Aorta (tissue), 5 donors: ENCODE measurements at regions of chr4 and their contacts with region 1.

Region 1: GRCh38 chr4:87961993-87962392 is 13.5 kb upstream of the SPP1 start:
- DNase-seq: no peak
- ATAC-seq: no peak
- H3K4me3 ChIP-seq: no peak overlapping the region
- H3K27ac ChIP-seq: no peak overlapping the region
- H3K4me1 ChIP-seq: no peaks in the 10 kb centered on the region
- H3K27me3 ChIP-seq: no peaks in the 10 kb centered on the region

Region 2: DNA sequence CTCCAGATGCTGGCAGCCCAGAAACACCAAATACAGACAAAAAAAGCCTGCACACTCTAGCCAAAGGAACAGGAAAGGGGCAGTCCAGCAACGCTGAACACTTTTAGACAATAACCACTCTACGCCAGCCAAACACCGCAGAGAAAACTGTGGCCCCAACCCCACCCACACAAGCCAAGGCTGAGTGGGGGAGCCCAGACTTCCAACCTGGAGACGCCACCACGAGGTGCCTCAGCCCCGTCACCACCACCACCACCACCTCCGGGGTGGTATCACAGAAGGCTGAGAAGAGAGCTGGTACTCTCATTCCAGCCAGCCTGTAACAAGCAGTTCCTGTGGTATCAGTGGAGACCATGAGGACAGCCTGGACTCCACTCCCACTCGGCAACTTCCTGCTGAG is 106.4 kb before region 1 on chr4:
- intact Hi-C with region 1: no loop called
- DNase-seq: no peak
- ATAC-seq: no peak
- H3K4me3 ChIP-seq: no peak overlapping the region
- H3K27ac ChIP-seq: no peak overlapping the region
- H3K4me1 ChIP-seq: no peaks in the 10 kb centered on the region
- H3K27me3 ChIP-seq: no peaks in the 10 kb centered on the region

Region 3: DNA sequence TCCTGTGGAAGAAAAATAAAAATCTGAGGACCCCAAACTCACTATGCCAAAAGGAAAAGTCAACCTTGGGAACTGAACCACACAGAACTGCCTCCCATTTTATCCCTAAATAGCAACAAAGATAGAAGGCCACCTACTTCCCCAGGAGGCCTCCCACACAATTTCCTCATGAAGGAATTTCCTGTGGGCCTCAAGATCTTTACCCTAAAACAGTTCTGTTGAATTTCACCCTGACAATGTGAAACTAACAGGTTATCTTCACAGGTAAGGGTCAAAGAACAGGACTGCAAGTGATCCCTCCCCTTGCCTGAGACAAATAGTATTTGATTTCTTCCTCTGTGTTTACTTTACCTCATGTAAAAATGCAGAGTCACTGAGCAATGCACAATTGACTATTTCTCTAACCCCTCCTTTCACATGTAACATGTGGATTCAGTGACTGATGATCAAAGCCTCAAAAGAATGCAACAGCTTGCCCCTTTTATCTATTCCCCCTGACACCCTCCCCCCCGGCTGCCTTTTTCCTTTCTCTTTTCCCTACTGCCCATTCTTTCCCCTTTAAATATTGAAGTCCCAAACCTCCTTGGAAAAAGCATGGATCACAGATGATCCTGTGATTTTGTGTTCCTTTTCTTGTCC is 95.9 kb before region 1 on chr4:
- intact Hi-C with region 1: loop called in 1 of 2 experiments (anchors 5 kb)
- DNase-seq: no peak
- ATAC-seq: no peak
- H3K4me3 ChIP-seq: no peak overlapping the region
- H3K27ac ChIP-seq: no peak overlapping the region
- H3K4me1 ChIP-seq: no peaks in the 10 kb centered on the region
- H3K27me3 ChIP-seq: no peaks in the 10 kb centered on the region